B cell (primary cell): ENCODE measurements at regions of chr7 and their contacts with region 1.

Region 1: DNA sequence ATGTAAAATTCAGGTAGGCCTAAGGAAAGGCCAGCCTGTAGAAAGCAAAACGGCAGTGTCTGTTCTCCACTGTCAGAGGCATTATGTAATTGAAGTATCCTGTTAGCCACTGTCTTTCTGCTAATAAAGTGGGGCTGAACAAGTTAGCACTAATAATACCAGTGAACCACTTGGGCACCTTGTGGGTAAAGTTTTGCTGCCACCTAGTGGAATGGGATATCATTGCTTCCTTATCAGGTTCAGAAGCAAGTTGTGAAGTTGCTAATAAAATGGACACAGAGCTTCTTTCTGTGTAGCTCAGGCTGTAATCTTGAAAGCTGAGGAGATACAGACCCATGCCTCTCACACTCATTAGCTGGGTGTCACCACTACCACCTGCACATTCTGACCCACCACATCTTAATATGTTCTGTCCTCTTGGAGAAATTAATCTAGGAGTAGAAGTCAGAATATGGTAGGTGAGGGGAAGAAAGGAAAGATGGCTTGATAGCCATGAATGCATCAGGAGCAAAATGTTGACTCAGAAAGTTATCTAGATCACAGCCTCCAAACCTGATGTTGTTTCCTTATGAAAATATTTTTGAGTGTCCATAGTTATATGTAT is 175.1 kb downstream of the SEPTIN7 start:
- DNase-seq: peak; percentile 82
- ATAC-seq: peak; percentile 80
- H3K4me3 ChIP-seq: no peak overlapping the region
- H3K4me3 Mint-ChIP-seq: no peak overlapping the region
- H3K27ac ChIP-seq: no peak overlapping the region
- H3K27ac Mint-ChIP-seq: no peak overlapping the region
- H3K4me1 ChIP-seq: peaks cover 3 to 6% of the 10 kb centered on the region in 2 donors
- H3K4me1 Mint-ChIP-seq: peaks cover 4% of the 10 kb centered on the region
- H3K27me3 ChIP-seq: peaks cover 0 to 9% (median 4%) of the 10 kb centered on the region in 4 experiments
- H3K27me3 Mint-ChIP-seq: peaks cover 14% of the 10 kb centered on the region
- CTCF ChIP-seq: peak; percentile 84

Region 2: DNA sequence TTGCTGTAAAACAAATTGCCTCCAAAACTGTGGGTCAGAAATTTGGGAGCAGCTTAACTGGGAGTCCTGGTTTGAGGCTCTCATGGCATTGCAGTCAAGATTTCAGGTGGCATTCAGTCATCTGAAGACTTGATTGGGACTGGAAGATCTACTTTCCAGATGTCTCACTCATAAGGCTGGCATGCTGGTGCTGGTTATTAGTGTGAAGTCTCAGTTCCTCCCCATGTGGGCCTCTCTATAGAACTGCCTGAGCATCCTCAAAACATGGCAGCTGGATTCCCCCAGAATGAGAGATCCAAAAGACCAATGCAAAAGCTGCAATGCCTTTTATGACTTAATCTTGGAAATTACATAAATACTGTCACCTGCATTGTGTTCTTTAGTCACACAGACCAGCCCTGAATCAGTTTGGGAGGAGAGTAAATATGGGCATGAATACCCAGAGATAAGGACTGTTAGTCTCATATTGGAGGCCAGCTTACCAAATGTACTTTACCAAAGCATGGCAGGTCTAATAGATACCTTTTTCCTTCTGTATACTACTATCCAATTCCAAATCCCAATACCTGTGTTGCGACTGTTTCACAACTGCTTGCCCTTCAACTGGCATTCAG is 274.6 kb before region 1 on chr7:
- CTCF ChIA-PET with region 1: interaction called, 3 read pairs
- POLR2A ChIA-PET with region 1: no interaction called
- intact Hi-C with region 1: loop called (anchors 10 kb)
- DNase-seq: no peak
- ATAC-seq: no peak
- H3K4me3 ChIP-seq: no peak overlapping the region
- H3K4me3 Mint-ChIP-seq: no peak overlapping the region
- H3K27ac ChIP-seq: no peak overlapping the region
- H3K27ac Mint-ChIP-seq: no peak overlapping the region
- H3K4me1 ChIP-seq: no peaks in the 10 kb centered on the region
- H3K4me1 Mint-ChIP-seq: peaks cover 4% of the 10 kb centered on the region
- H3K27me3 ChIP-seq: no peaks in the 10 kb centered on the region
- H3K27me3 Mint-ChIP-seq: no peaks in the 10 kb centered on the region
- CTCF ChIP-seq: no peak

Region 3: DNA sequence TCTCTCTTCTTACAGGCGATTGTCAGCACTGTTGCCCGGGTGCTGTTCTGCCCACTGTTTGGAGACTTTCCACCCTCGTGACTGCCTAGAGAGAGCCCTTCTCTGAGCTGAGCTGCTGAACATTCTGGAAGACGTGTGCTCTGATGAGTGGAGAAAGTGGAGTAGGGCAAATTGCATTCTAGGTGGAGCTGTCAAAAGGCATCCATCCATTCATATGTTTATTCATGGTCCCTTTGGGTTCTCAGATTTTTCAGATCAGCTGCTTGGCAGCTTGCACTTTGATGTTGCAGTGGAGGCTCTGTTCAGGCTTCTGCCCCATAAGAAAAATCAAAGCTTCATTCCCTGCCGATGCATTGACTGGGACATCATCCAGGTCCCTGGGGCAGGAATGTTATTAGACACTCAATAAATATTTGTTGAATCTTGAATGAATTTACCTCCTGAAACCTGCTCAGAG is 56.4 kb after region 1 on chr7:
- CTCF ChIA-PET with region 1: no interaction called
- POLR2A ChIA-PET with region 1: no interaction called
- intact Hi-C with region 1: no loop called
- DNase-seq: no peak
- ATAC-seq: no peak
- H3K4me3 ChIP-seq: no peak overlapping the region
- H3K4me3 Mint-ChIP-seq: no peak overlapping the region
- H3K27ac ChIP-seq: no peak overlapping the region
- H3K27ac Mint-ChIP-seq: no peak overlapping the region
- H3K4me1 ChIP-seq: no peaks in the 10 kb centered on the region
- H3K4me1 Mint-ChIP-seq: no peaks in the 10 kb centered on the region
- H3K27me3 ChIP-seq: peaks cover 0 to 10% (median 0%) of the 10 kb centered on the region in 4 experiments
- H3K27me3 Mint-ChIP-seq: peaks cover 51% of the 10 kb centered on the region
- CTCF ChIP-seq: no peak

Region 4: DNA sequence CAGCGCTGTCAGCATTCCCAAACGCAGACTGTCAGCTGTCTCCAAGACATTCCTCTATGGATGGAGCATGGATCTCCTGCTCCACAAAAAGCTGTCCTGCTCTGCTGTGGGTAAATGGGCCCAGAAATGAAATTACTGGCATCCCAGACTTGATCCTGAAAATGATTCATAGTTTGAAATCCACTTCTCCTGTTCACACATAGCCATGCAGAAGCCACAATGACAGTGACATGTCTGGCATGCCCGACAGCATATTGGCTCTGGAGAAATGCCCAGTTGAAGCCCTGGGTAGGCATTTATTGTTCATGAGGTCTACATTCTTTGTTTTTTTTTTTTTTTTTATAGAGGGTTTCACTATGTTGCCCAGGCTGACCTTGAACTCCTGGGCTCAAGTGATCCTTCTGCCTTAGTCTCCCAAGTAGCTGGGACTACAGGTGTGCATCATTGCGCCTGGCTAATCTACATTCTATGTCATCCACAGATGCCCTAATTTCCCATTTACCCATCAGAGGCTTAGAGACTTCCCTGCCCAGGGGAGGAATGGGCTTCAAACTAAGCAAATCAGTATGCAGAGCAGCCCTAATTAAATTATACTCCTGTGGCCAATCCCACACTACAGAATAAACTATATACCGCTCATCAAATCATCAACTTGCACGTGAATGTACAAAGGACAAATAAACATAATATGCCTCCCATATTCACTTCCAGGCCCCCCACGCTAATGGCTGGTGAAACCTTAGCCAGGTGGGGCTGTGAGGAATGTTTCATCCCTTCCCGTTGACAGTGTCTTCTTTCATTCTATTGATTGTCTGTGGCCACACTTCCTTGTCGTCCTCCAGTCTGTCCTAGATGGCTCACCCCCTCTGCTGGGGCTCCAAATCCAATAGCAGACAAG is 115.3 kb after region 1 on chr7:
- CTCF ChIA-PET with region 1: no interaction called
- POLR2A ChIA-PET with region 1: no interaction called
- intact Hi-C with region 1: no loop called
- DNase-seq: no peak
- ATAC-seq: no peak
- H3K4me3 ChIP-seq: no peak overlapping the region
- H3K4me3 Mint-ChIP-seq: no peak overlapping the region
- H3K27ac ChIP-seq: no peak overlapping the region
- H3K27ac Mint-ChIP-seq: no peak overlapping the region
- H3K4me1 ChIP-seq: no peaks in the 10 kb centered on the region
- H3K4me1 Mint-ChIP-seq: no peaks in the 10 kb centered on the region
- H3K27me3 ChIP-seq: no peaks in the 10 kb centered on the region
- H3K27me3 Mint-ChIP-seq: peaks cover 4% of the 10 kb centered on the region
- CTCF ChIP-seq: no peak